HCT116 (cell line): ENCODE measurements at regions of chr7 and their contacts with region 1.

Region 1: DNA sequence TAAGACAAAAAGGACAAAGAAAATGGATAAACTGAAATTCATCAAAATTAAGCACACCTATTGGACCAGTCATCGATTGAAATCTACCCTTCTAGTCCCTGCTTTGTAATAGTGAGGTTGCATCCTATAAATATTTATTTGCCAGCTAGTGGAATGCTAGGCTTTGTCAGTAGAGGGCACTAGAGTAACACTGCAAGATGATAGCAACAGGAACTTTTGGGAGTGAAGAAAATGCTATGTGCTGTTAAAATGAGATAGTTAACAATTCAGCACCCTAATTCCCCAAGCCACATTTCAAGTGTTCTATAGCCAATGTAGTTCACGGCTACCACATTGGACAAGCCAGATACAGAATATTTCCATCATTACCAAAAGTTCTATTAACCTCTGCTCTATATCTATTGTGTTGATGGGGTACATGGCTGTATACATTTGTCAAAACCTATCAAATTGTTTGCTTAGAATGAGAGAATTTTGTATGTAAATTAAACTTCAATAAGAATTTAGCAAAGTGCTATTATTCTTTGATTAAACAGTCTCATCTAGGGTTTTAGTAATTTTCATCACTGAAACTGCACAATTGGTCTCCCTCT is 69.8 kb downstream of the LSMEM1 start:
- DNase-seq: peak; percentile 56
- ATAC-seq: peak; percentile 89
- H3K4me3 ChIP-seq: no peak overlapping the region
- H3K27ac ChIP-seq: no peak overlapping the region
- H3K4me1 ChIP-seq: no peaks in the 10 kb centered on the region
- H3K27me3 ChIP-seq: no peaks in the 10 kb centered on the region
- CTCF ChIP-seq: peak; percentile 74 to 96 (median 84)
- POLR2A ChIP-seq: no peak
- RAD21 ChIP-seq: peak; percentile 92

Region 2: DNA sequence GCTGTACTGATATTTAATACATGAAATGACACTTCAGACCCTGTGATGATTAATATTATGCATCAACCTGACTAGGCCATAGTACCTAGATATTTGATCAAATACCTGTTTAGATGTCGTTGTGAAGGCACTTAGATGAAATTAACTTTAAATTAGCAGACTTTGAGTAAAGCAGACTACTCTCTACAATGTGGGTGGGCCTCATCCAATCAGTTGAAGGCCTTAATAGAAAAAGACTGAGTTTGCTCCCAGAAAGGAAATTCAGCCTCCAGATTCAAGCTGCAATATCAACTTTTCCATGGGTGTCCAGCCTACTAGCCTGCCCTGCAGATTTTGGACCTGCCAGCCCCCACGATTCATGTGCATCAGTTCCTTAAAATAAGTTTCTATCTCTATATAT is 308.3 kb after region 1 on chr7:
- CTCF ChIA-PET with region 1: no interaction called
- POLR2A ChIA-PET with region 1: no interaction called
- RAD21 ChIA-PET with region 1: no interaction called
- intact Hi-C with region 1: no loop called
- DNase-seq: no peak
- ATAC-seq: no peak
- H3K4me3 ChIP-seq: no peak overlapping the region
- H3K27ac ChIP-seq: no peak overlapping the region
- H3K4me1 ChIP-seq: no peaks in the 10 kb centered on the region
- H3K27me3 ChIP-seq: no peaks in the 10 kb centered on the region
- CTCF ChIP-seq: no peak
- POLR2A ChIP-seq: no peak
- RAD21 ChIP-seq: no peak

Region 3: DNA sequence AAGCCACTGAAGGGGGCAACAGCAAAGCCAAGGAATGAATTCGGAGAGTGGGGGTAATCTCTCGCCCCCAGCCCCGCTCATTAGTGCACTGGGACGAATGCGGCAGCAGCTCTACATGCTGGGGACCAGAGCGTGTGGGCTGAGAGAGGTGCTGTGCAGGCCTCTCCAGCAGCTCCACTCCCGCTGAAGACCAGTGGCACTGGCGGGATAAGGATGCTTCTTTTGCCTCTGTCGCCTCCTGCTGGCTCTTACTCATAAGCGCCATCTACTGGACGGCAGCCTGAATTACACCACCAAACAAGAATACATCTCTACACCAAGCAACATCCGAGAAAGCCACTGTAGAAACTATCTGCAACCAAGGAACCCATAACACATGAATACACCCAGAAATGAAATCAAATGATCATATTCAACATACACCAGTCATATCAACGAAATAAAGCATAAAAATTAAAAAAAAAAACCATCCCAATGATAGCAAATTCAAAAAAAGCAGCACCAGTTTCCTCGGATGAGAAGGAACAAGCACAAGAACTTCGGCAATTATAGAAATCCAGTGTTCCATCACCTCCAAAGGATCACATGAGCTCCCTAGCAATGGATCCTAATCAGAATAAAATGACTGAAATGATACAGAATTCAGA is 318.7 kb after region 1 on chr7:
- CTCF ChIA-PET with region 1: interaction called, 9 read pairs
- POLR2A ChIA-PET with region 1: no interaction called
- RAD21 ChIA-PET with region 1: no interaction called
- intact Hi-C with region 1: loop called (anchors 1 kb)
- DNase-seq: peak; percentile 41
- ATAC-seq: peak; percentile 89
- H3K4me3 ChIP-seq: no peak overlapping the region
- H3K27ac ChIP-seq: no peak overlapping the region
- H3K4me1 ChIP-seq: no peaks in the 10 kb centered on the region
- H3K27me3 ChIP-seq: no peaks in the 10 kb centered on the region
- CTCF ChIP-seq: peak; percentile 94 to 98 (median 98)
- POLR2A ChIP-seq: no peak
- RAD21 ChIP-seq: peak; percentile 68

Region 4: GRCh38 chr7:112898432-112899290 is 348.1 kb after region 1 on chr7:
- CTCF ChIA-PET with region 1: interaction called, 22 read pairs
- POLR2A ChIA-PET with region 1: no interaction called
- RAD21 ChIA-PET with region 1: no interaction called
- intact Hi-C with region 1: loop called (anchors 1 kb)
- DNase-seq: peak; percentile 51
- ATAC-seq: peak; percentile 95
- H3K4me3 ChIP-seq: no peak overlapping the region
- H3K27ac ChIP-seq: no peak overlapping the region
- H3K4me1 ChIP-seq: no peaks in the 10 kb centered on the region
- H3K27me3 ChIP-seq: no peaks in the 10 kb centered on the region
- CTCF ChIP-seq: peak; percentile 62 to 89 (median 81); a peak in 5 of 6 replicates
- POLR2A ChIP-seq: no peak
- RAD21 ChIP-seq: peak; percentile 86

Region 5: GRCh38 chr7:113289140-113289740 is 738.7 kb after region 1 on chr7:
- CTCF ChIA-PET with region 1: no interaction called
- POLR2A ChIA-PET with region 1: no interaction called
- RAD21 ChIA-PET with region 1: no interaction called
- intact Hi-C with region 1: loop called (anchors 10 kb)
- DNase-seq: peak; percentile 51
- ATAC-seq: peak; percentile 98
- H3K4me3 ChIP-seq: no peak overlapping the region
- H3K27ac ChIP-seq: no peak overlapping the region
- H3K4me1 ChIP-seq: no peaks in the 10 kb centered on the region; a peak in 1 of 4 replicates
- H3K27me3 ChIP-seq: no peaks in the 10 kb centered on the region
- CTCF ChIP-seq: peak; percentile 53 to 66 (median 54); a peak in 5 of 6 replicates
- POLR2A ChIP-seq: no peak
- RAD21 ChIP-seq: peak; percentile 82

Region 6: GRCh38 chr7:113421696-113422330 is 871.2 kb after region 1 on chr7:
- CTCF ChIA-PET with region 1: interaction called, 5 read pairs
- POLR2A ChIA-PET with region 1: no interaction called
- RAD21 ChIA-PET with region 1: no interaction called
- intact Hi-C with region 1: loop called (anchors 1 kb)
- DNase-seq: peak; percentile 88
- ATAC-seq: peak; percentile 100
- H3K4me3 ChIP-seq: no peak overlapping the region
- H3K27ac ChIP-seq: no peak overlapping the region
- H3K4me1 ChIP-seq: no peaks in the 10 kb centered on the region
- H3K27me3 ChIP-seq: no peaks in the 10 kb centered on the region
- CTCF ChIP-seq: peak; percentile 85 to 96 (median 89)
- POLR2A ChIP-seq: no peak
- RAD21 ChIP-seq: peak; percentile 82